Naive thymus-derived CD4-positive, alpha-beta T cell (primary cell): ENCODE measurements at regions of chr6 and their contacts with region 1.

Region 1: GRCh38 chr6:18323935-18324705 is 59.8 kb upstream of the DEK start:
- DNase-seq: peak in 7 of 9 donors; percentile 18 to 56 (median 49)
- ATAC-seq: peak; percentile 79
- H3K4me3 ChIP-seq: no peak overlapping the region
- H3K4me3 Mint-ChIP-seq: no peak overlapping the region
- H3K27ac ChIP-seq: no peak overlapping the region
- H3K27ac Mint-ChIP-seq: no peak overlapping the region
- H3K4me1 ChIP-seq: no peaks in the 10 kb centered on the region
- H3K4me1 Mint-ChIP-seq: peaks cover 0 to 8% (median 0%) of the 10 kb centered on the region in 7 donors
- H3K27me3 ChIP-seq: no peaks in the 10 kb centered on the region
- H3K27me3 Mint-ChIP-seq: peaks cover 0 to 11% (median 0%) of the 10 kb centered on the region in 5 donors

Region 2: GRCh38 chr6:17542243-17542642 is 781.9 kb before region 1 on chr6:
- CTCF ChIA-PET with region 1: no interaction called
- POLR2A ChIA-PET with region 1: no interaction called
- intact Hi-C with region 1: no loop called
- DNase-seq: no peak
- ATAC-seq: no peak
- H3K4me3 ChIP-seq: no peak overlapping the region
- H3K4me3 Mint-ChIP-seq: no peak overlapping the region
- H3K27ac ChIP-seq: no peak overlapping the region
- H3K27ac Mint-ChIP-seq: no peak overlapping the region
- H3K4me1 ChIP-seq: no peaks in the 10 kb centered on the region
- H3K4me1 Mint-ChIP-seq: no peaks in the 10 kb centered on the region
- H3K27me3 ChIP-seq: no peaks in the 10 kb centered on the region
- H3K27me3 Mint-ChIP-seq: peaks cover 0 to 10% (median 5%) of the 10 kb centered on the region in 5 donors

Region 3: GRCh38 chr6:18387061-18387721 is 63.1 kb after region 1 on chr6 and contains the start of gene RNF144B:
- CTCF ChIA-PET with region 1: interaction called, 3 read pairs
- POLR2A ChIA-PET with region 1: no interaction called
- intact Hi-C with region 1: loop called in 1 of 2 experiments (anchors 2 kb)
- DNase-seq: peak; percentile 41 to 73 (median 67)
- ATAC-seq: peak; percentile 92
- H3K4me3 ChIP-seq: peak within 1 kb of the TSS; percentile 70
- H3K4me3 Mint-ChIP-seq: peak within 1 kb of the TSS; percentile 90 to 100 (median 99)
- H3K27ac ChIP-seq: peak within 1 kb of the TSS; percentile 69
- H3K27ac Mint-ChIP-seq: peak within 1 kb of the TSS; percentile 2 to 95 (median 92)
- H3K4me1 ChIP-seq: peaks cover 4 to 18% of the 10 kb centered on the region in 2 donors
- H3K4me1 Mint-ChIP-seq: peaks cover 15 to 48% (median 35%) of the 10 kb centered on the region in 7 donors
- H3K27me3 ChIP-seq: no peaks in the 10 kb centered on the region
- H3K27me3 Mint-ChIP-seq: peaks cover 0 to 21% (median 0%) of the 10 kb centered on the region in 5 donors
- total RNA-seq, gene RNF144B: 1.5 to 23.5 (median 7.9) TPM

Region 4: GRCh38 chr6:18503593-18504231 is 179.6 kb after region 1 on chr6:
- CTCF ChIA-PET with region 1: interaction called, 63 read pairs
- POLR2A ChIA-PET with region 1: no interaction called
- intact Hi-C with region 1: loop called (anchors 1 kb)
- DNase-seq: peak in 6 of 9 donors; percentile 19 to 54 (median 38)
- ATAC-seq: peak; percentile 63
- H3K4me3 ChIP-seq: no peak overlapping the region
- H3K4me3 Mint-ChIP-seq: peak overlapping the region in 2 of 10 donors; percentile 29 to 50
- H3K27ac ChIP-seq: no peak overlapping the region
- H3K27ac Mint-ChIP-seq: no peak overlapping the region
- H3K4me1 ChIP-seq: no peaks in the 10 kb centered on the region
- H3K4me1 Mint-ChIP-seq: peaks cover 0 to 4% (median 0%) of the 10 kb centered on the region in 7 donors
- H3K27me3 ChIP-seq: no peaks in the 10 kb centered on the region
- H3K27me3 Mint-ChIP-seq: peaks cover 0 to 7% (median 4%) of the 10 kb centered on the region in 5 donors

Region 5: DNA sequence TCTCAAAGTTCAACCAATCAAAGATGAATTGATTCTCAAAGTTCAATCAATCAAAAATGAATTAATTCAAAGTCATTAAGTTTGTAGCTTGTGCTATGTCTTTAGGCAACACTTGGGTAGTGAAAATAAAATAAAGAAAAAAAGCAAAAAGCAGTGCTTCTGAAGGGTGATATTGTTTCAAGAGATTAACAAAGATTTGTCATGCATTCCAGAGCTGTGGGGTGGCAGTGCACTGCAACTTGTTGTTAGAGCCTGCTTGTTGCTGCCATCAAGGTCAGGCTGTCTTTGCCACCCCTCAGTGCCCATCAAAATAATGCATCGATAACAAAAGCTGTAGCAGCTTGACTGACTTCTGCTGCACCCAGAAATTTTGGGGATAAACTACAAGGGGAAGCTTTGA is 191.6 kb after region 1 on chr6:
- CTCF ChIA-PET with region 1: no interaction called
- POLR2A ChIA-PET with region 1: no interaction called
- intact Hi-C with region 1: no loop called
- DNase-seq: no peak
- ATAC-seq: no peak
- H3K4me3 ChIP-seq: no peak overlapping the region
- H3K4me3 Mint-ChIP-seq: no peak overlapping the region
- H3K27ac ChIP-seq: no peak overlapping the region
- H3K27ac Mint-ChIP-seq: no peak overlapping the region
- H3K4me1 ChIP-seq: no peaks in the 10 kb centered on the region
- H3K4me1 Mint-ChIP-seq: no peaks in the 10 kb centered on the region
- H3K27me3 ChIP-seq: no peaks in the 10 kb centered on the region
- H3K27me3 Mint-ChIP-seq: peaks cover 0 to 3% (median 0%) of the 10 kb centered on the region in 5 donors

Region 6: DNA sequence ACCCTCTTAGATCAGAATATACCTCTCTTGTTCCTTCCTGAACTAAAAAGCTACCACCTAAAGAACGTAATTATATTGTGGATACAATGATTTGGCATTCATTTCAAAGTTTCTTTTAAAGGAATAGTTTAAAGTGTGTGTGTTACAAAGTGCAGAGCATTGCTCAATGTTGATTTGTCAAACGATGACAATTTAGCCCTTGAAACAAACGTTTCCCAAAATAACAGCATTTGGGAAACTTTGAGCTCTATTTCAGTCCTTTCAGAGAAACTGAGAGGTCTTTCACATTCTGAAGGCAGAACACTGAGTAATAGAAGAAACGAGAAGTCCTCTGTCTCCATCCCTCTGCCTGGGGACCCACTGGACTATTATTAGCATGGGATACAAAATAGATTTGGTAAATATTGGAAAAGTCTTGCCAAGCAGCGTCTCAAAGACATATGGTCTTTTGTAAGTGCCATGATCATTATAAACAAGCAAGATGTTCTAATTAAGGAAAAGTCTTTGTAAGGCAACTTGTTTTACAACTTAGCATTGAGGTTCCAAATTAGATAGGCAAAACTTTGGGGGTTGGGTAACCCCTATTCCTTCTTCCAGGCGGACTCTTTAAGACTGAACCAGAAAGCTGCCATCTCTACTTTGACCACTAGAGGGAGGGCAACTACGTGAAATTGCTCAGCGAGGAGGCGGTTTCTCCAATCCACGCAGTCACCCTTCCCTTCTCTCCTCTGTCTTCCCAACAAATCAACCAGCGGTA is 271.8 kb after region 1 on chr6:
- CTCF ChIA-PET with region 1: no interaction called
- POLR2A ChIA-PET with region 1: no interaction called
- intact Hi-C with region 1: loop called in 1 of 2 experiments (anchors 1 kb)
- DNase-seq: peak in 6 of 9 donors; percentile 9 to 30 (median 21)
- ATAC-seq: peak; percentile 63
- H3K4me3 ChIP-seq: no peak overlapping the region
- H3K4me3 Mint-ChIP-seq: peak overlapping the region in 3 of 10 donors; percentile 12 to 47 (median 39)
- H3K27ac ChIP-seq: no peak overlapping the region
- H3K27ac Mint-ChIP-seq: no peak overlapping the region
- H3K4me1 ChIP-seq: no peaks in the 10 kb centered on the region
- H3K4me1 Mint-ChIP-seq: peaks cover 0 to 2% (median 0%) of the 10 kb centered on the region in 7 donors
- H3K27me3 ChIP-seq: no peaks in the 10 kb centered on the region
- H3K27me3 Mint-ChIP-seq: peaks cover 2 to 26% (median 17%) of the 10 kb centered on the region in 5 donors

Region 7: DNA sequence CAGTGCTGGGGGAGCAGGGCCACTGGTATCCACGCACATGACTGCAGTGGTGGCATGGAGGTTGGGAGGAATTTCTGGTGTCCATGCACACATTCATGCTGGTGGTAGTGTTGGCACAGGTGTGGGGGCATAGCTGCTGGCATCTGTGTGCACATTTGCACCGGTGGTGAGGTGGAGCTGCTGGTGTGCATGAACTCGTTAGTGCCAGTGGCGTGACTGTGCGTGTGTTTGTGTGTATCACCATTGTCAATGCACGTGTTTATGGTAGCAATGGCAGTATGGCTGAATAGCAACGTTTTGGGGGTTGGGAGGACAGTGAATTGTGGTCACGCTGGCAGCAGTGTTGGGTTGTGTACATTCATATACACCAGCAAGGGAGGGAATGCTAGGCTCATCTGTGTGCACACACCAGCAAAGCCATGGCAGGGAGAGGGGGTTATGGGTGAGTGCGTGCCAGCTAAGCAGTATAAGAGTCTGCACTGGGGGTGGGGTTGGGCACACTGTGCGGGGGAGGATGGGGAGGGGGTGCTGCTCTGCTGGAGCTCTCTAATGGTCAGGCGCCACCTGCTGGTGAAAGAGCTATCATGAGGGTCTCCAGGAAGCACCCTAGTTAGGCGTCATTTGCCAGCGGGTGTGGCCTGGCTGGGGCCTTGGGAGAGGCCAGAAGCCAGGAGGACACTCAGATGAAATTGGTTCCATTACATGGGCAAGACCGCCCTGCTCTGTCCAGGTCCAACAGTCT is 886.9 kb after region 1 on chr6:
- CTCF ChIA-PET with region 1: no interaction called
- POLR2A ChIA-PET with region 1: no interaction called
- intact Hi-C with region 1: loop called in 1 of 2 experiments (anchors 10 kb)
- DNase-seq: no peak
- ATAC-seq: peak; percentile 20
- H3K4me3 ChIP-seq: no peak overlapping the region
- H3K4me3 Mint-ChIP-seq: no peak overlapping the region
- H3K27ac ChIP-seq: no peak overlapping the region
- H3K27ac Mint-ChIP-seq: no peak overlapping the region
- H3K4me1 ChIP-seq: no peaks in the 10 kb centered on the region
- H3K4me1 Mint-ChIP-seq: no peaks in the 10 kb centered on the region
- H3K27me3 ChIP-seq: no peaks in the 10 kb centered on the region
- H3K27me3 Mint-ChIP-seq: no peaks in the 10 kb centered on the region